ENCODE measurements at regions of chr2 and their contacts with region 1.

Region 1: DNA sequence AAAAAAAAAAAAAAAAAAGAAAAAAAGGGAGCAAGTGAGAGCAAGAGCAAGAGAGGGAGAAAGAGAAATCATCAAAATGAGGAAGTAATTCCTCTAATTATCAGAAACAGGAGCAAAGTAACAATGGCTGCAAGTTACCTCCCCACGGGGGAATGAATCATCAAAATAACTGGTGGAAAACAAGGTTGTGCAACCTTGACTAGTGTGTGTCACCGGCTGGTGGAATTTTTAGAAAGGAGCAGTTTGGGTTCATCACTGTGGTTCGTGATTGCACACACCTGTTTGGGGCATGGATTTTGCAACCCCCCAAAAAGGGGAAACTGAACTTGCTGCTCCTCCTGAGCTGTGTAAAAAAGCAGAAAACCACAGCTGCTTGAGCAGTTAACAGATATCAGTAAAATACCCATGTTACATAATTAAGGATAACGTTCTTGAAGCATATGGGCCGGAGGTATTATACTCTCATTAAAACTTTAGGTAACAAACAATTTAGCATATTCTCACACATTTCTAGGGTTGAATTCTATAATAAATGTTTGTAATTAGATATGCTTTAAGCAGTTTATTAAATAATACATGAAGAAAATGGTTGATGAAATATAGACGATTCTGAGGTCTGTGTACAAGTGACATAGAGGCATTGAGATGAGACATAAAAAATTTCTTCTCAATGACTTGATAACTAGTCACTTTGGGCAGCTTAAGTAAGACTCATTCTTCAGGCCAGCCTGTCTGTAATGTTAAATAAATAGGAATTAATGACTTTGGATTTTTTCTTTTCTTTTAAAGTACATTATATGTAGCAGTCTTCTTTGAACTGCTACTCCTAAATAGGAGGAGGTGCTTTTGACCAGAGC is 184.2 kb upstream of the ZEB2 start:
- DNase-seq: peak; percentile 72
- ATAC-seq: peak; percentile 87
- H3K4me3 ChIP-seq: peak overlapping the region in 3 of 5 experiments; percentile 12 to 23 (median 17)
- H3K4me3 Mint-ChIP-seq: peak overlapping the region; percentile 50
- H3K27ac ChIP-seq: peak overlapping the region; percentile 9 to 36
- H3K27ac Mint-ChIP-seq: peak overlapping the region; percentile 70
- H3K4me1 ChIP-seq: peaks cover 41 to 42% of the 10 kb centered on the region in 2 donors
- H3K4me1 Mint-ChIP-seq: peaks cover 46% of the 10 kb centered on the region
- H3K27me3 ChIP-seq: no peaks in the 10 kb centered on the region
- H3K27me3 Mint-ChIP-seq: no peaks in the 10 kb centered on the region
- CTCF ChIP-seq: no peak

Region 2: DNA sequence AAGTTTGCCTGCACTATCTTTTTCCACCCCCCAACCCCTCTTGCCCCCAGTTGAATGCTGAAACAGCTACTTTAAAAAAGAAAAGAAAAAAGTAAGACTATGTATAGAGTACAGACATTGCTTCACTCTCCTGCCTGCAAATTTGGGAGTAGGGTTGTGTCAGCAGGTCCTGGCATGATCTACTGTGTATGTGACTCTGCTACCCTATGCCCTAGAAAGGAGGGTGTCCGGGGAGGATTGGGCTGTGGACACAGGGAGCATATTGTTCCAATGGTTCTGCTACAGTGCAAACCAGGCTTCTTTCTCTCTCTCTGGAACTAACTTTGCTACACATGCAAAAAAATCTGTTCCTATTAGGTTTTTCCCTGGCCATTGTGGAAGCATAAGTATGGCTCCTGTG is 174.2 kb before region 1 on chr2:
- CTCF ChIA-PET with region 1: no interaction called
- POLR2A ChIA-PET with region 1: no interaction called
- intact Hi-C with region 1: no loop called
- DNase-seq: no peak
- ATAC-seq: no peak
- H3K4me3 ChIP-seq: no peak overlapping the region
- H3K4me3 Mint-ChIP-seq: no peak overlapping the region
- H3K27ac ChIP-seq: no peak overlapping the region
- H3K27ac Mint-ChIP-seq: no peak overlapping the region
- H3K4me1 ChIP-seq: no peaks in the 10 kb centered on the region
- H3K4me1 Mint-ChIP-seq: no peaks in the 10 kb centered on the region
- H3K27me3 ChIP-seq: peaks cover 0 to 3% (median 0%) of the 10 kb centered on the region in 4 experiments
- H3K27me3 Mint-ChIP-seq: peaks cover 3% of the 10 kb centered on the region
- CTCF ChIP-seq: no peak

Region 3: DNA sequence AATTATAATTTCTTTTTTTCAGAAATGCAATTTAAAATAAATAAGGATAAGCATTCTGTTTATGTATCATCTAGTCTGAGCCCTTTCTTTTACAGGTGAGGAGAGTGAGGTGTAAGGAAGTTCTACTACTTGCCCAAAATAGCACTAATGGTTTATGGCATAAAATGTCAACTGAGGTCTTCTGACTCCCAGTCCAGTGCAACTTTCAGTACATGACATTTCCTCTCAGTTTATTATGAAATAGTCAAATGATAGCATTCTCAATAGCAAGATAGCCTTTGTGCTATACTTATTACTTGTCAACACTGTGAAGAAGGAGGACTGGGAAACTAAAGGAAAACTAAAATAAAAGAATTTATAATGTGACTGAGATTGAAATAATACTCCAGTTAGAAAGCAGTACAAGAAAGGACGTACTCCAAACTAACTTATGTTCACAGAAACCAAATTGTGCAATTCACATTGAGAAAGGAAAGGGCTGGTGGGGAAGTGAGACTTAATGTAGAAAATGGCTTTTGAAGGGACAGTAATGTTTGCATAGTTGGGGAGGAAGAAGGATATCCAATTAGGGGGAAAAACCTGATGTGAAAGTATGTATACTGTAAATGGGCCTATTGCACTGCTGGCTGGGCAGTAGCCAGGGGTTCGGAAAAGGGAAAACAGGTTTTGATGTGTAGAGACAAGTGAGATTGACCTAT is 17.4 kb before region 1 on chr2:
- CTCF ChIA-PET with region 1: no interaction called
- POLR2A ChIA-PET with region 1: no interaction called
- intact Hi-C with region 1: loop called (anchors 2 kb)
- DNase-seq: peak; percentile 29
- ATAC-seq: no peak
- H3K4me3 ChIP-seq: no peak overlapping the region
- H3K4me3 Mint-ChIP-seq: no peak overlapping the region
- H3K27ac ChIP-seq: no peak overlapping the region
- H3K27ac Mint-ChIP-seq: no peak overlapping the region
- H3K4me1 ChIP-seq: peaks cover 19 to 21% of the 10 kb centered on the region in 2 donors
- H3K4me1 Mint-ChIP-seq: peaks cover 36% of the 10 kb centered on the region
- H3K27me3 ChIP-seq: no peaks in the 10 kb centered on the region
- H3K27me3 Mint-ChIP-seq: no peaks in the 10 kb centered on the region
- CTCF ChIP-seq: no peak